ENCODE measurements at regions of chr7 and their contacts with region 1.

Region 1: GRCh38 chr7:133230591-133231194 is 22.2 kb upstream of the EXOC4 start:
- DNase-seq: peak; percentile 72
- H3K4me3 Mint-ChIP-seq: no peak overlapping the region
- H3K27ac Mint-ChIP-seq: no peak overlapping the region
- H3K4me1 Mint-ChIP-seq: no peaks in the 10 kb centered on the region
- H3K27me3 Mint-ChIP-seq: peaks cover 12% of the 10 kb centered on the region

Region 2: DNA sequence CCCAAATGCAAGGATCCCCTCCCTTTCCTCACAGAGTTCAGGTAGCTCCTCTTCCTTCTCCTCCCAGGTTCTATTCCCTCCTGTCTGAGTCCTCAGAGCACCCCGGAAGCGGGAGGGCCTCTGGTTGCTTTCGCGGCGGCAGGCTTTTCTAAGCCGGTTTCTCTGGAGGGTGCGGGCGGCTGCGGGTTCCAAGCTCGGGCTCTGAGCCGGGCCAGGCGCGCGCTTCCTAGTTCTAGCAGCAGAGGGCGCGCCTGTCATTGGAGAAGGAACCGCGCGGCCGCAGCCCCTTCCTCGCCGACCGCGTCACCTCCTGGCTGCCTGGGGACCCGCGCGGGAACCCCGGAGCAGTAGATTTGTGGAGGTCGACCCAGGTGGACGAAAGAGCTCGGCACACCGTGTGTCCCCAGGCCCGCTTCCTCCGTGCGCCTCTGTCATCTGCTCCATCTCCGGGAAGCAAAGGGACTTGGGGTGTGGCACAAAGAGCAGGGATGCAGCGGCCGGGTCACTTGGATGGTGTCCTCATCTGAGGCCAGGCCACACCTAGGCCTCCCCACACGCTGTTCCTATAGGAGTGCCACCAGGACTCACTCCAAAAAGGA is 1285.3 kb before region 1 on chr7:
- CTCF ChIA-PET with region 1: no interaction called
- intact Hi-C with region 1: loop called (anchors 5 kb)
- DNase-seq: peak; percentile 44
- H3K4me3 Mint-ChIP-seq: no peak overlapping the region
- H3K27ac Mint-ChIP-seq: no peak overlapping the region
- H3K4me1 Mint-ChIP-seq: no peaks in the 10 kb centered on the region
- H3K27me3 Mint-ChIP-seq: peaks cover 30% of the 10 kb centered on the region

Region 3: GRCh38 chr7:132318352-132319318 is 912.1 kb before region 1 on chr7:
- CTCF ChIA-PET with region 1: no interaction called
- intact Hi-C with region 1: loop called (anchors 1 kb)
- DNase-seq: peak; percentile 83
- H3K4me3 Mint-ChIP-seq: no peak overlapping the region
- H3K27ac Mint-ChIP-seq: no peak overlapping the region
- H3K4me1 Mint-ChIP-seq: peaks cover 10% of the 10 kb centered on the region
- H3K27me3 Mint-ChIP-seq: peaks cover 39% of the 10 kb centered on the region

Region 4: GRCh38 chr7:132654150-132654549 is 576.5 kb before region 1 on chr7:
- CTCF ChIA-PET with region 1: no interaction called
- intact Hi-C with region 1: loop called (anchors 1 kb)
- DNase-seq: peak; percentile 53
- H3K4me3 Mint-ChIP-seq: no peak overlapping the region
- H3K27ac Mint-ChIP-seq: peak overlapping the region; percentile 74
- H3K4me1 Mint-ChIP-seq: peaks cover 39% of the 10 kb centered on the region
- H3K27me3 Mint-ChIP-seq: no peaks in the 10 kb centered on the region

Region 5: DNA sequence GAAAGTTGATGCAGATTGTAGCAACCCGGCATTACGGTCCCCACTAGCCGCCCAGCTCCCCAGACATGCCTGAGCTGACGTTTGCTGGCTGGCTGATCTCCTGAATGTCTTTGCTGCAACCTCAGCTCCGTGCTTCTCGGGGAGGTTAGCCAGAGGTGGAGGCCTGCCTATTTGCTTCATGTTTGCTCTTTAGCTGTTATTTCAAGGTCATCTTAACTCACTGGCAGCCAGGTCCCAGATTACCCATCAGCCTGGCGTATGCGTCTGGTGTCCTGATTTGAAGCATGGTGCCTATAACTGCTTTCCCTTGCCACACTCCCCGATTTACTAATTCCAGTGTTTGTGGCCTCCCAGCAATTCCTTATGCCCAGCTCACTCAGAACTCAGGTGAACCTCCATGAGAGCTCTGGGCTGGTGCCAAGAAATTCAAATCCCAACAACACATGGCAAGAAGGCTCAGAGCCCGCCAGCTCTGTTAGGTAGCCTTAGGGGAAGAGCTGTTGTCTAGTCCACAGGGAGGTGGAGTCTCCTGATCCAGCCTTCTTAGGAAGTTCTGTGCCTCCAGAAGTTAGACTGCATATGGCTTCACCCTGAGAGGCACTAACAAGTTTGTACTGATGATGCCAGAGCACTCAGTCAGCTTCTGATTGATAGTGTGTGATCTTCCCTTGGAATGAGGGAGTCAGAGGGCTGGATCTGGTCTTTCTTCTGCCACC is 47.5 kb before region 1 on chr7:
- CTCF ChIA-PET with region 1: no interaction called
- intact Hi-C with region 1: no loop called
- DNase-seq: no peak
- H3K4me3 Mint-ChIP-seq: no peak overlapping the region
- H3K27ac Mint-ChIP-seq: no peak overlapping the region
- H3K4me1 Mint-ChIP-seq: no peaks in the 10 kb centered on the region
- H3K27me3 Mint-ChIP-seq: peaks cover 2% of the 10 kb centered on the region

Region 6: GRCh38 chr7:133265821-133266220 is 35.1 kb after region 1 on chr7:
- CTCF ChIA-PET with region 1: no interaction called
- intact Hi-C with region 1: no loop called
- DNase-seq: no peak
- H3K4me3 Mint-ChIP-seq: no peak overlapping the region
- H3K27ac Mint-ChIP-seq: no peak overlapping the region
- H3K4me1 Mint-ChIP-seq: peaks cover 36% of the 10 kb centered on the region
- H3K27me3 Mint-ChIP-seq: no peaks in the 10 kb centered on the region

Region 7: DNA sequence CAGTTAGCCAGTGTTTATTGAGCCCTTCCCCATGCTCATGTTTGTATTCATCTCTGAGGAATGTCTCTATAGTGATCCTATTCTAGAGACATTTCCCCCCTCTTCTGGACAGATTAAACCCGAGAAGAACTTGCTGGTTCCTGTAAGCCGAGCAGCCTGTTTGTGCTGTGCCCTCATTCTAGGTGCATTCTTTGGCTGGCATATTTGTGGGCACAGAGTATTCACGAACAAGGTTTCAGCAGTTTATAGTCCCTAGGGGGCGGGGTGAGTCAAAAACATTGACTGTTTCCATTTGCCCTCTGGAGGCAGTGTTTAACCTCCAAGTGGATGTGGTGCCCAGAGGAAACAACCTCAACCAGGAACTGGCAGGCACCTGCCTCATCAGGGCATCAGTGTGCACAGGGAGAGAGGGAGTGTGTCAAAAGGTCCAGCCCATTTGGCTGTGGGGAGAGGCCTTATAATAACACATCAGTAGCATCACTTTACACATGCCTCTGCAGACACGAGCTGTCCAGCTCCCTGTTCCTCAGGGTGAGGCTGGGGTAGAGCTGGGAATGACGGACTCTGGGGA is 623.1 kb after region 1 on chr7:
- CTCF ChIA-PET with region 1: no interaction called
- intact Hi-C with region 1: loop called (anchors 5 kb)
- DNase-seq: peak; percentile 45
- H3K4me3 Mint-ChIP-seq: no peak overlapping the region
- H3K27ac Mint-ChIP-seq: no peak overlapping the region
- H3K4me1 Mint-ChIP-seq: no peaks in the 10 kb centered on the region
- H3K27me3 Mint-ChIP-seq: no peaks in the 10 kb centered on the region

Measured in activated naive CD4-positive, alpha-beta T cell treated with anti-CD3 and anti-CD28 coated beads for 36 hours (primary cell).